Dorsolateral prefrontal cortex (tissue), 120 donors: ENCODE measurements at regions of chr22 and their contacts with region 1.

Region 1: GRCh38 chr22:40818747-40819598 is at the start of gene SLC25A17:
- DNase-seq: peak; percentile 73 to 93 (median 87)
- H3K4me3 ChIP-seq: peak within 1 kb of the TSS; percentile 66 to 100 (median 94)
- H3K27ac ChIP-seq: peak within 1 kb of the TSS in 50 of 59 donors; percentile 3 to 90 (median 71)
- H3K27me3 ChIP-seq: no peaks in the 10 kb centered on the region
- CTCF ChIP-seq: peak in 44 of 56 donors; percentile 15 to 60 (median 38)
- total RNA-seq, gene SLC25A17: 11.1 to 26.6 (median 17.2) TPM

Region 2: GRCh38 chr22:40856513-40857308 is 37.7 kb after region 1 on chr22 and contains the starts of genes ST13 and XPNPEP3:
- intact Hi-C with region 1: loop called (anchors 2 to 5 kb)
- DNase-seq: peak; percentile 93 to 97 (median 95)
- H3K4me3 ChIP-seq: peak within 1 kb of the TSS; percentile 70 to 100 (median 94)
- H3K27ac ChIP-seq: peak within 1 kb of the TSS; percentile 94 to 100 (median 100)
- H3K27me3 ChIP-seq: no peaks in the 10 kb centered on the region
- CTCF ChIP-seq: peak in 26 of 56 donors; percentile 3 to 40 (median 19)
- total RNA-seq, gene ST13: 157 to 321 (median 196) TPM
- total RNA-seq, gene XPNPEP3: 13.7 to 36.2 (median 20.5) TPM